Right ventricle myocardium superior (tissue), 1 donor: ENCODE measurements at regions of chrX and their contacts with region 1.

Region 1: GRCh38 chrX:154019633-154020528 is at the start of gene IRAK1:
- DNase-seq: peak; percentile 75
- ATAC-seq: peak; percentile 89
- total RNA-seq, gene IRAK1: 34.2 TPM

Region 2: DNA sequence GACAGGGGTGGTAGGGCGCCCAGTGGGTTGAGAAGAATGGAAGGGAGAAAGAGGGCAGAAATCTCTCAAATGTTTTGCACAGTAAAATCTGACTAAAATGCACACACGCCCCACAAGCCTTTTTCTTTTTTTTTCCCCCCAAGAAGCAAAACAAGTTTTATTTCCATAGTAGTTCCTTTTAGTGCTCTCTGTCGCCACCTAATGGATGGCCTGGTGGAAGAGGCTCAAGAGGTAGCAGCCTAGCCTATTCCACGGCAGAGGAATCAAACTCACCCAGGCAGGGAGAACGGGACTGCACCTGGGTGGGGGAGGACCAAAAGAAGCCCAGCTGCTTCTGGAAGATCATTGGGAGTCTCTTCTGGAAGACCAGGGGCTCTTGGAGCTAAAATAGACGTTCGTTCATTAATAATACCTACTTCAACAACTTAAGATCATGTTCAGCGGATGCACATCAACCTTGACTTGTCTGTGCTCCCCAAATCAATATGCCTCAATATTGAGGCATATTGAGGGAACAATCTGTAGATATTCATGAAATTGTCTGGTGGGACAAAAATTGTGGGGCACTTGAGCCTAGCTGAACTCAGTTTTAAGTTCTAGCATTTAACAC is 31.4 kb after region 1 on chrX:
- intact Hi-C with region 1: loop called (anchors 5 kb)
- DNase-seq: peak; percentile 70
- ATAC-seq: peak; percentile 47

Region 3: DNA sequence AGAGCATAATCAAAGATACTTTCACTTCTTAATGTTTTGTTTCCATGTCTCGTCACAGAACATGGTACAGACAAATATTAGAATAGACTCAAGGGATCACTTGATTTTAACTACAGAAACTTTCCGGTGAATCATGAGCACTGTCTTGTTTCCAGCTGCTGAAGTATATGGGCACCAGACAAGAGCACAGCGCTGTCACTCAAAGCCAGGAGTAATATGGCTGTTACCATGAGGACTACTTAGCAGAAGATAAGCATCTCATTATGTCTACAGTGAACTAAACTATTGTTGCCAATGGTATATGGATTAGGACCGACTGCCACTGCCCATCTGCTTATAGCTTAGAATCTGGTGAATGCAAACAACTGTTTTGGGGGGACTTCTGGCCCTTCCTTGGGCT is 43.4 kb after region 1 on chrX:
- intact Hi-C with region 1: no loop called
- DNase-seq: no peak
- ATAC-seq: no peak